ENCODE measurements at regions of chr11 and their contacts with region 1.

Region 1: DNA sequence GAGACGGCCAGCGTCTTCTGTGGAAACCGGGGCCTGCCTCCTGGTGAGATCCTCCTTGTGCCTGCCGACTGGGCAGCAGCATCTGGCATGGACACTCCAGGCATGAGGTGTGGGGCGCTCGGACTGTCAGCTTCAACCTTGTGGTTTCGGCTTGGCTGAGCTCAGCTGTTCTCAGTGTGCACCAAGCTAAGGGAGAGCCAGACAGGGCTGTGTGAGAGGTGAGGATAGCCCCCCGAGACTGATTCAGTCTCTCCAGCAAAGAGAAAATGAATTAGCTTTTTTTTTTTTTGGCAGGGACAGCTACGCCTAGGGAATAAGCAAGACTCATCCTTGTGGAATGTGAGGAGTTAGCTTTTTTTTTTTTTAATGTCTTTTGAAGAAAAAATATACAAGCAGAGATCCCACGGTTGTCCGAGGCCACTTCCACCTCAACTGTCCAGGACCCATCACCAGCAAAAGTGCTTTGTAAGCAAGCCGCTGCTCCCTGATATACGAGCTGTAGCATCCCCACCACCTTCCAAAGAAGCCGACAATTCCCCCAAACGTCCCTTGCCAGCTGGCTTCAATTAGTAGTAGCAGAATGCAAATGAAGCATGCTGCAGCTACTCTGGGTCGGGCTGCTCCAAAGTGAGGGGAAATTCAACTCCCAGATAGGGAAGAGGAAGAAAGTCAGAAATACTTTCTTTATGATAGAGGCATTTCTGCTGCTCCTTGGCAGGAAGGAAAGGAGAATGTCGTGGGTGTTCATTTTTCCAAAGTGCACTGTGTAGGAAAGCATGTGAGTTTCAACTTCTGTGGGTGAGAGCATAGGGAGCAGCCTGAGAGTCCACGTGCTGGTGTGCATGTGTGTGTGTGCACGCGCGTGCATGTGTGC is 9.7 kb upstream of the THY1 start:
- DNase-seq: peak; percentile 66
- H3K4me3 ChIP-seq: peak overlapping the region; percentile 50
- H3K27ac ChIP-seq: peak overlapping the region; percentile 93
- H3K27me3 ChIP-seq: peaks cover 5% of the 10 kb centered on the region
- CTCF ChIP-seq: no peak

Region 2: GRCh38 chr11:119421941-119422808 is 10.5 kb before region 1 on chr11:
- CTCF ChIA-PET with region 1: no interaction called
- POLR2A ChIA-PET with region 1: interaction called, 18 read pairs
- DNase-seq: no peak
- H3K4me3 ChIP-seq: peak overlapping the region; percentile 89
- H3K27ac ChIP-seq: peak overlapping the region; percentile 47
- H3K27me3 ChIP-seq: no peaks in the 10 kb centered on the region
- CTCF ChIP-seq: no peak

Region 3: GRCh38 chr11:119445850-119446249 is 13.1 kb after region 1 on chr11:
- CTCF ChIA-PET with region 1: interaction called, 3 read pairs
- POLR2A ChIA-PET with region 1: interaction called, 10 read pairs
- DNase-seq: no peak
- H3K4me3 ChIP-seq: no peak overlapping the region
- H3K27ac ChIP-seq: no peak overlapping the region
- H3K27me3 ChIP-seq: no peaks in the 10 kb centered on the region
- CTCF ChIP-seq: no peak